ENCODE measurements at regions of chr17 and their contacts with region 1.

Region 1: DNA sequence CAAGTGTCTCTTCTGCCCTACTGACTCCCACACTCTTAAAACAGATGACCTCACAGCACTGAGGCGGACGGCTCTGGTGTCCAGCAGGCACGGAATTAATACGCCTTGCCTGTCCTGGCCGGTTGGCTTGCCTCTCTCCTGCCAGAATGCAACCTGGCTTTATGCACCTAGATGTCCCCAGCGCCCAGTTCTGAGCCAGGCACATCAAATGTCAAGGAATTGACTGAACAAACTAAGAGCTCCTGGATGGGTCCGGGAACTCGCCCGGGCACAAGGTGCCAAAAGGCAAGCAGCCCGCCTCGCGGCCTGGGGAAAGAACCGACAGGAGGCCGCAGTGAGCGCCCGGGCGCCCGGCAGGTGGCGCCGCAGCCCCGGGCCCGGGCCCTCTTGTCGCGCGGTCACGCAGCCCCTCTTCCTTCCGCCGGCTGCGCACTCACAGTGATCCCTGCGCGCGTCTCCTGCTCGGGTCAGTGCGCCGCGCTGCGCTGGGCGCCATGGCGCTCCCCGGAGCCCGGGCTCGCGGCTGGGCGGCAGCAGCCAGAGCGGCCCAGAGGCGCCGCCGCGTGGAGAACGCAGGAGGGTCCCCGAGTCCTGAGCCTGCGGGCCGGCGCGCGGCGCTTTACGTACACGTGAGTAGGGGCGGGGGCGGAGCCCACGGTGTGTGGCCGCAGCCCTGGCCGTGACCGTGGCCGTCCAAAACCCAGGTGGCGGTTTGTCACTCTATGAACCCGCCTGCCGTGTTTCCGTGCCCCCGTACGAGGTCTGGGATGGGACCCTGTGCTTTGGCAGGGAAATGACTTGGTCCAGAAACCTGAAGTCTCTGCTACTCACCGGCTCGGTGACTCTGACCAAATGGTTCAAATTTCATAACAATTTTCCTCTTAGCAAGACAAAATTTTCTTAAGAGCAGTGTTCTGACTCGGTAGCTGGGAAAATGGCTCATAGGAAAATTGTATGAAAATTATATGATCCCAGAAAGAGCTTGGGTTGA is at the start of gene RSAD1:
- DNase-seq: peak; percentile 84 to 88
- ATAC-seq: peak; percentile 82 to 93 (median 90)
- H3K4me3 ChIP-seq: peak within 1 kb of the TSS; percentile 52 to 89 (median 80)
- H3K27ac ChIP-seq: peak within 1 kb of the TSS; percentile 74 to 96 (median 91)
- H3K4me1 ChIP-seq: peaks cover 2 to 48% (median 34%) of the 10 kb centered on the region in 9 donors
- H3K27me3 ChIP-seq: peaks cover 0 to 6% (median 0%) of the 10 kb centered on the region in 7 donors
- CTCF ChIP-seq: peak; percentile 75 to 97 (median 94)
- total RNA-seq, gene RSAD1: 36.2 to 52.3 (median 45.5) TPM

Region 2: DNA sequence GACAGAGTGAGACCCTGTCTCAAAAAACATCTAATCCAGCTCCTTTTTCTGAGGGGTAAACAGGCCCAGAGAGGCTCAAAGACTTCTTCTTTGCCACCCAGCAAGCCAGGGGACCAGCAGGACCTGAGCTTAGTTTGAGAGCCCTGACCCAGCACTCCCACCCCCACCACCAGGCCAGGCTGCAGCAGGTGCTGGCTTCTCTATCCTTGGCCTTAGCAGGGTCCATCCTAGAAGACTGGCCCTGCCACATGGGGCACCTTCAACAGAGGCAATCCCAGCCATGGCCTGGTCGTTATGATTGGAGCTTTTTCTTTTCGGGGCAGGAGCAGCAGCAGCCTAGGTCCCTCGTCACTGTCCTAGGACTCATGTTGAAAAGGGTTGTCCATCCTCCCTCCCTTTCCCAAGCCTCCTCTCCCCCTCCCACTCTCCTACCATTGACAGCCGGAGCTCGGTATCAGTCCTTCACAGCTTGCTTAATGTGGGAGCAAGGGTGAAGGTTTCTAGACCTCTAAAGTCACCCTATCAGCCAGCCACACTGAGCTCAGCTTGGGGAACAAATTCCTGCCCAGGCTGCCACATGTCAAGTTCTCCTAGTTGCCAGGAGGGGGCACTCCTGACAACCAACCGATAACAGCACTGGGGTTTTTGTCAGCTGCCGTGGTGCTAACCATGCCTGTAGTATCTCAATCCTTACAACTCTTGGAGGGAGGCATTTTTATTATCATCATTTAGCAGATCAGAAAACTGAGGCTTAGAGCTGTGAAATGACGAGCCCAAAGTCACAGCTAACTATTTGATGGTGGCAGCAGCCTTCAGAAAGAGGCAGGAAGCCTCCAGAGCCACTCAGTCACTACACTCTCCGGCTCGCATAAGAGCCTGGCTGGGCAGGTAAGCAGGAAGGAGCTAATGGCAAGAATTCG is 116.9 kb before region 1 on chr17:
- intact Hi-C with region 1: loop called in 1 of 10 experiments (anchors 10 kb)
- DNase-seq: peak in 1 of 2 donors; percentile 47
- ATAC-seq: peak in 6 of 8 donors; percentile 40 to 72 (median 60)
- H3K4me3 ChIP-seq: no peak overlapping the region
- H3K27ac ChIP-seq: peak overlapping the region in 1 of 10 donors; percentile 26
- H3K4me1 ChIP-seq: peaks cover 0 to 44% (median 10%) of the 10 kb centered on the region in 9 donors
- H3K27me3 ChIP-seq: no peaks in the 10 kb centered on the region
- CTCF ChIP-seq: peak; percentile 51 to 77 (median 71)

Region 3: DNA sequence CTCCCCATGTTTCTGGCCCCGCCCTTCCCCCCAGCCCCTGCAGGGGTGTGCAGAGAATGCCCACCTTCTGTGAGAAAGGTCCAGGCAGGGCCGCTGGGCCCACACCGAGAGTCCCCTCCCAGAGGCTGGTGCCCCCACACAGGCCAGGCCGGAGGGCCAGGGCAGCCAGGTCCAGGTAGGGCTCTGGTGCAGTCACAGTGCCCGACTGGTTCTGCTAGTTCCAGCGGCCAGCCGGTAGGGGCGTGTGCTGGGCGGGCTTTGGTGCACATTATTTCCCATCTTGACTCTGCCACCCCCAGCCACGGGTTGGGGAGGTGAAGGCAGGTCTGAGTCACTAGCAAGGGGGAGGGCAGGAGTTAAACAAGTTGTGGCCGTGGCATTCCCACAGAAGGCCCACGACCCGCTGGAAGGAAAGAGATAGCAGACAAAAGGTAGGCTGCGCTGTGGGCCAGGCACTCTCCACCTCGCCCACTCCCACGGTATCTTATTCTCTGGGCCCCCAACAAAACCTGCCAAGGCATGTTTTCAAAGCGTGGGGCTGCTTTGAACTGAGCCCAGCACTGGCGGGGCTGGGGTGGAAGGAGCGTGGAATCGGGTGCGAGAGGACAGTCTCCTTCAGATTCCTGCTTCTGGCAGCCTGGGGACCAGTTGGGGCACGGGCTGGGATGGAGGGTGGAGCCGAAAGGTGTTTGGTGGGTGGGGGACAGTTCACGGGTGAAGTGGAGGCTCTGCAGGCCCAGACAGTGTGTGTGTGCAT is 55.7 kb after region 1 on chr17:
- intact Hi-C with region 1: loop called in 2 of 10 experiments (anchors 5 to 10 kb)
- DNase-seq: no peak
- ATAC-seq: peak; percentile 37 to 71 (median 64)
- H3K4me3 ChIP-seq: peak overlapping the region in 9 of 10 donors; percentile 10 to 54 (median 48)
- H3K27ac ChIP-seq: peak overlapping the region; percentile 29 to 89 (median 80)
- H3K4me1 ChIP-seq: peaks cover 3 to 33% (median 19%) of the 10 kb centered on the region in 9 donors
- H3K27me3 ChIP-seq: peaks cover 0 to 45% (median 24%) of the 10 kb centered on the region in 7 donors
- CTCF ChIP-seq: peak in 7 of 9 donors; percentile 11 to 43 (median 37)

Region 4: DNA sequence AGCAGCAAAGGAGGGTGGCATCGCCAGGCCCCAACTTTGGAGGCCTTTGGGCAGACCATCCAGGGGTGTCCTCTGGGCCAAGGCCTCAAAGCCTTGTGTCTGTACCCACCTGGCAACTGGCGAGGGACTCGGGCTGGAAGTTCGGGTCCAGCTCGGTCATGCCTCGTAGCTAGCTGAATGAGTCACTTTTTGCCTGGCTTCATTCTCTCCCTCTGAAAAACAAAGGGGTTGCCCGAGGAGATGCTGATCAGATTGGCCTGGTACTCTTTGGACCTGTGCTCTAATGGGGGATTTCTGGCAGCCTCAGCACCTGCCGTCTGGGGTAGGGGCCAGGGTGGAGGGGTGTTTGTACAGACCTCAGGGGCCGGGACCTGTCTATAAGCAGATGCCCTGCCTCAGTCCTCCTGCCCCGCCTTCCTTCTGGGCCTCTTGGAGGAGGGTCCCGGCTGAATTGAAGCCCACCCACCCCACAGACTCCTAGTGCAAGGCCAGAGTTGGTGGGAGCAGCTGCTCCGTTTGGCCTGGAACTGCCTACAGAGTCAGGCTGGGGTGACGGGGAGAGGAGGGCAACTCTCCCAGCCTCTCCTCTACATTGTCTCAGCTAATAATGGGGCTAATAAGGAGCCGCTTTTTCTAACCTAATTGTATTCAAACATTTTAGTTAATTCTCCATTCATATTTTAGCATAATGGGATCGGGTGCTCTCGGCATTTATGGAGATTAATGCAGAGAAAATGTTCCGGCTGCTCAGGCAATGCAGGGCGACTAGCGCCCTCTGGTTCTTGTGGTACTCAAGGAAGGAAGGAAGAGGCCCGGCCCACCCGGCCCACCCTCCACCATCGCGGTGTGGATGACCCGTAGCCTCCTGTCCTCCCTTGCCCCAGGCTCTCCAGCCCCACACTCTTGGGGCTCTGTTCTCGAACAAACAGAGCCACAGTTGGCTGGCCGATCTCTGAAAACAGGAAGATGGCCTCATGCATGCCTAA is 134.6 kb after region 1 on chr17:
- intact Hi-C with region 1: loop called in 1 of 10 experiments (anchors 5 kb)
- DNase-seq: no peak
- ATAC-seq: peak in 3 of 8 donors; percentile 41 to 63 (median 57)
- H3K4me3 ChIP-seq: no peak overlapping the region
- H3K27ac ChIP-seq: no peak overlapping the region
- H3K4me1 ChIP-seq: peaks cover 0 to 12% (median 0%) of the 10 kb centered on the region in 9 donors
- H3K27me3 ChIP-seq: peaks cover 0 to 26% (median 7%) of the 10 kb centered on the region in 7 donors
- CTCF ChIP-seq: peak in 7 of 9 donors; percentile 24 to 64 (median 54)

Region 5: DNA sequence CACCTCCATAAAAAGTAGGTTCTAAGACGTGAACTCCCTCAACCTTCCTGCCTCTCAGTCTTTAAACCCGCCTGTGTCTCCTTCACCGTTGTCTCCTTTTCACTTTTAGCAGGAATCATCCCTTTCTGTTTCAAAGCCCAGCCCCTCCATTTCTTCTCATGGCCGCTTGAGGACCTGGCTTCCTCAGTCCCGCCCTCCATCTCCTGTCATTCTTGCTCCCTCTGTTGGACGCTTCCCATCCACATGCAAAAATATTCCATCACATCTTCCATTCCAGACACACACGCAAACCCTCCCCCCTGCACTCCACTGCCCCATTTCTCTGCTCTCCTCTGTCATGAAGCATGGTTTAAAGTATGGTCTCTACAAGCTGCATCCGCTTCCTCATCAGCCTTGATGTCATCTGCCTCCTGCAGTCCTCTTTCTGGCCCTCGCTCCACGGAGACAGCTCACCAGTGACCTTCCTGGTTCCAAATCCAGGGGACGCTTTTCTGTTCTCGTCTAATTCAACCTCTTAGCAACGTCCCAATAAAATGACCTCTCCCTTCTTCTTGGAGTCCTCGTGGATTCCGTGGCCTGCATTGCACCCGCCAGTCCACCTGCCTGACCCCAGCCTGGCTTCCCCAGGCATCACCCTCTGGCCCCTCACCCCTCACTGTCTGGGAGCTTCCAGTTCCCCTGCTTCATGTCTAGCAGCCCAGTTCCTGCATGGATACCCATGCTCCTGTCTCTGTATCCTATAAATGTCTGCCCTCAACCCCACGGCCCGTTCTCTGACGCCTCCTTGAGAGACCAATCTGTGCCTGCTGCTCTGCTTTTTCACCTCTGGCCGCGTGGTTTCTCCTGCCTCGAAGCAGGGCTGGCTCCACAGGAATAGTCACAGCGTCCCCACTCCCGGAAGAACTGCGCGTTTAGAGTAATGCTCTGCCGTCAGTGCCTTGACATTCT is 202.9 kb after region 1 on chr17:
- intact Hi-C with region 1: loop called in 1 of 10 experiments (anchors 10 kb)
- DNase-seq: peak in 1 of 2 donors; percentile 59
- ATAC-seq: peak in 6 of 8 donors; percentile 53 to 84 (median 76)
- H3K4me3 ChIP-seq: no peak overlapping the region
- H3K27ac ChIP-seq: peak overlapping the region in 1 of 10 donors; percentile 53
- H3K4me1 ChIP-seq: peaks cover 0 to 19% (median 8%) of the 10 kb centered on the region in 9 donors
- H3K27me3 ChIP-seq: no peaks in the 10 kb centered on the region
- CTCF ChIP-seq: peak; percentile 18 to 69 (median 58)

Region 6: DNA sequence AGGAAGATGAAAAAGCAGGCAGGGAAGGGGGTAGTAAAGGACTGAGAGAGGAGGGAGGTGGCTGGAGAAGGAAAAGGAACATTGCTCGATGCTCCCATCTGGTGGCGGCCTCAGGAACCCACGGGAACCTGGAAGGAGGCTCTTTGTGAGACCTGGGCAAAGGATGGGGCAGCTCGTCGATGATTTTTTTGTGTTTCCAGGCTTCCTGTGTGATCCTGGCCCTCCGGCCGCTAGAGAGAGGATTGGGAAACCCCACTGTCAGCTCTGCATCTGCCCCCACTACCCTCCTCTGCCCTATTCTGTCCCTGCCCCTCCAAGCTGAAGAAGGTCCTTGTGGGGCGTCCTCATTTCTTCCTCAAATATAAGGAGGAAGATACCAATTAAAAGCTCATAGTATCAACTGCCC is 363.3 kb after region 1 on chr17:
- intact Hi-C with region 1: loop called in 1 of 10 experiments (anchors 5 kb)
- DNase-seq: peak; percentile 70 to 71
- ATAC-seq: peak in 7 of 8 donors; percentile 46 to 71 (median 59)
- H3K4me3 ChIP-seq: no peak overlapping the region
- H3K27ac ChIP-seq: no peak overlapping the region
- H3K4me1 ChIP-seq: peaks cover 0 to 35% (median 3%) of the 10 kb centered on the region in 9 donors
- H3K27me3 ChIP-seq: no peaks in the 10 kb centered on the region
- CTCF ChIP-seq: peak; percentile 50 to 86 (median 83)